RWPE1 (cell line): ENCODE measurements at regions of chr5 and their contacts with region 1.

Region 1: GRCh38 chr5:61658592-61659008 is 326.5 kb downstream of the ZSWIM6 start:
- DNase-seq: peak; percentile 87
- H3K27ac ChIP-seq: no peak overlapping the region
- CTCF ChIP-seq: peak; percentile 98

Region 2: DNA sequence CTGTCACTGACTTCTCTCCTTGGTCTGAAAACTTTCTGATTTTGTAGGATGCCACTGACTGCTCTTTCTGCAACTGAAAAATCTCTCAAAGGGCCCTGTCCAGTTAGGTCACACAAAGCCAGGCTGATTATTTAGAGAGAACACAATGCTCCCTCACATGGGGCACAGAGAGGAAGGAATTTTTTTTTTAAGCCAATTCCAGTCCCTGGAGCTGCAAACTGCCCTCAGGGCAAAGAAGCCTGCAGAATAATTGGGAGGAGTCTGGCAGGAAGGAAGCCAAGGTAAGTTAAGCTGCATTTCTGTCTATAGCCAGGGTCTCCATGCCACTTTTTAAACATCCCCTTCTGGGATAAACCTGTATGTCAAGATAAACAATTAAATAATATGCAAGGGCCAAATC is 21.0 kb before region 1 on chr5:
- CTCF ChIA-PET with region 1: interaction called, 10 read pairs
- POLR2A ChIA-PET with region 1: no interaction called
- DNase-seq: no peak
- H3K27ac ChIP-seq: no peak overlapping the region
- CTCF ChIP-seq: no peak

Region 3: GRCh38 chr5:61683148-61683547 is 24.5 kb after region 1 on chr5:
- CTCF ChIA-PET with region 1: interaction called, 10 read pairs
- POLR2A ChIA-PET with region 1: no interaction called
- DNase-seq: no peak
- H3K27ac ChIP-seq: no peak overlapping the region
- CTCF ChIP-seq: no peak